ENCODE measurements at regions of chr11 and their contacts with region 1.

Region 1: GRCh38 chr11:34997952-34998528 is 81.6 kb downstream of the PDHX start:
- DNase-seq: no peak
- H3K4me3 Mint-ChIP-seq: no peak overlapping the region
- H3K27ac Mint-ChIP-seq: peak overlapping the region; percentile 16
- H3K4me1 Mint-ChIP-seq: peaks cover 35% of the 10 kb centered on the region
- H3K27me3 Mint-ChIP-seq: no peaks in the 10 kb centered on the region

Region 2: GRCh38 chr11:34926101-34926830 is 71.8 kb before region 1 on chr11:
- intact Hi-C with region 1: loop called (anchors 2 kb)
- DNase-seq: no peak
- H3K4me3 Mint-ChIP-seq: no peak overlapping the region
- H3K27ac Mint-ChIP-seq: no peak overlapping the region
- H3K4me1 Mint-ChIP-seq: peaks cover 7% of the 10 kb centered on the region
- H3K27me3 Mint-ChIP-seq: no peaks in the 10 kb centered on the region

Region 3: GRCh38 chr11:35165423-35166368 is 167.7 kb after region 1 on chr11:
- intact Hi-C with region 1: loop called (anchors 1 kb)
- DNase-seq: peak; percentile 92
- H3K4me3 Mint-ChIP-seq: peak overlapping the region; percentile 63
- H3K27ac Mint-ChIP-seq: peak overlapping the region; percentile 97
- H3K4me1 Mint-ChIP-seq: peaks cover 100% of the 10 kb centered on the region
- H3K27me3 Mint-ChIP-seq: no peaks in the 10 kb centered on the region

Region 4: DNA sequence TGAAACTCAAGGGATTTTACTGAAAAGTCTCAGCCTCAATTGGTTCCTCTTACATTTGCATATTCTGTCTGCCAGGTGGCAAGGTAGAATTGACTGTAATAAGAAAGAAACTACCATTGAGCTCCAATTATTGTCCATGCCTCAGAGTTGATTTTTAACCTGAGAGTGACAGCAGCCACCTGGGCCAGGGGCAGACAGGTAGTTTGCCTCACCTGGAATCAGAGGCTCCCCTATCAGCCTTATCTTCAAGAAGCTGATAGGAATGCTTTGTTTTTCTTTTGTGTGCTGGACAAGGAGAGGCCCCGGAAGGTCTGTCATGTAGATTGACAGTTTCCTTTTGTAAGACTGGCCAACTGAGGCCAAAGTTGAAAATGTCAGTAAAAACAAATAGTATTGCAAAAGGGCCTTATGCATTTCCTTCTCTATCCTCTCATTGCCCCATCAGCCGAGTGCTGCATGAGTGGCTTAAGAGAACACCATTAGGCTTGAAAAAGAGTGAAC is 175.0 kb after region 1 on chr11:
- intact Hi-C with region 1: loop called (anchors 1 kb)
- DNase-seq: no peak
- H3K4me3 Mint-ChIP-seq: peak overlapping the region; percentile 56
- H3K27ac Mint-ChIP-seq: peak overlapping the region; percentile 75
- H3K4me1 Mint-ChIP-seq: peaks cover 92% of the 10 kb centered on the region
- H3K27me3 Mint-ChIP-seq: no peaks in the 10 kb centered on the region

Region 5: GRCh38 chr11:35237860-35238715 is 240.0 kb after region 1 on chr11:
- intact Hi-C with region 1: loop called (anchors 1 kb)
- DNase-seq: peak; percentile 48
- H3K4me3 Mint-ChIP-seq: peak overlapping the region; percentile 42
- H3K27ac Mint-ChIP-seq: peak overlapping the region; percentile 36
- H3K4me1 Mint-ChIP-seq: peaks cover 67% of the 10 kb centered on the region
- H3K27me3 Mint-ChIP-seq: no peaks in the 10 kb centered on the region

Region 6: DNA sequence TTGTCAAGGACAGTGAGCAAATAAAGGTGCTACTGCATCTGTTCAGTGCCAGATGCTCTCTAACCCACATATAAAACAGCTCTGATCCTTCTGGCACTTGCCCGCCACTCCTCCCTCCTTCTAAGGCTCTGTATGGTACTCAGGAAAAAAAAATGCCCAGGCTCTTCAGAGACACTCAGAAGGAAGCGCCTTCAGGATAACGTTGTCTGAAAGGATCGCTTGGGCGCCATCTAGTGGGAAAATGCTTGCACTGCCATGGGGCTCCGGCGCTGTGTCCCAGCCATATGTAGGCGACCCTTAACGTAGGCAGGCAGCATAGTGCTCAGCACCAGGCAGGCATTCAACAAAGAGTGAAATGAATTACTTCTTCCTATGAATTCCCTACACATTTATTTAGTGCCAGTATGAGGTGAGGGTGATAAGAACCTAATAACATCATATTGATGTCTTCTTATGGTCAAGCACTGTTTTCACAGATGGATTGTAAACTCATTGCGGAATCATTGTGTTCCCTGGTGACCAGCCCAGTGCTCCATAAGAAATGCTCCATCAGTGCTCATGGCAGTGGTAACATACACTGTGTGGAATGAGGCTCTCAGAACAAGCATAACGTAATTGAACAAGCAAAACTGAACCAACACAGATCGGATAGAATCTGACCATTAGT is 487.7 kb after region 1 on chr11:
- intact Hi-C with region 1: loop called (anchors 10 kb)
- DNase-seq: peak; percentile 34
- H3K4me3 Mint-ChIP-seq: no peak overlapping the region
- H3K27ac Mint-ChIP-seq: no peak overlapping the region
- H3K4me1 Mint-ChIP-seq: no peaks in the 10 kb centered on the region
- H3K27me3 Mint-ChIP-seq: peaks cover 20% of the 10 kb centered on the region

Measured in activated T-helper 1 cell treated with anti-CD3 and anti-CD28 coated beads, Interleukin-12 subunit alpha, Interleukin-12 subunit beta, Interleukin-2, Interleukin-4 antibody, amounts not matched to agents 30 ng/mL and 10 ng/mL and 1 ng/mL, durations not matched to agents 14 hours and 24 hours and 36 hours (primary cell).